ENCODE measurements at regions of chr17 and their contacts with region 1.

Region 1: DNA sequence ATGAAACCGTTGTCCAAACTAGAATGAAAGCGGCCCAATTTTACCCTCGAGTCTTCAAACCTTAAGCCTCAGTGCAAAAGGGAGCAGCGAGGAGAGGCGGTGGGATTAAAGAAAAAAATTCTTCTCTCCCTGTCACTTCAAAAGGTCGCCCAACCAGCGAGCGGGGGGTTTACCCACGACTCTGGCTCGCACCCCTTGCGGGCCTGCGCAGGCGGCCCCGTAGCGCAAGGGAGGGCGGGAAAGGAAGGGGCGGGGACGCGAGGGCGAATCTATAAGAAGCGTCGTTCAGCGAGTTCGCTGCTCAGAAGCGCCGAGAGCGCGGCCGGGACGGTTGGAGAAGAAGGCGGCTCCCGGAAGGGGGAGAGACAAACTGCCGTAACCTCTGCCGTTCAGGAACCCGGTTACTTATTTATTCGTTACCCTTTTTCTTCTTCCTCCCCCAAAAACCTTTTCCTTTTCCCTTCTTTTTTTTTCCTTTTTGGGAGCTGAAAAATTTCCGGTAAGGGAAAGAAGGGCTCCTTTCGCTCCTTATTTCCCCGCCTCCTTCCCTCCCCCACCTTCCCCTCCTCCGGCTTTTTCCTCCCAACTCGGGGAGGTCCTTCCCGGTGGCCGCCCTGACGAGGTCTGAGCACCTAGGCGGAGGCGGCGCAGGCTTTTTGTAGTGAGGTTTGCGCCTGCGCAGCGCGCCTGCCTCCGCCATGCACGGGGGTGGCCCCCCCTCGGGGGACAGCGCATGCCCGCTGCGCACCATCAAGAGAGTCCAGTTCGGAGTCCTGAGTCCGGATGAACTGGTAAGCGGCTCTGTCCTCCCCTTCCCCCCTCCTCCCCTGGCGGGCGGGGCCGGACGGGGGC is at the start of gene POLR2A:
- DNase-seq: peak; percentile 96 to 100 (median 98)
- ATAC-seq: peak; percentile 66
- H3K4me3 ChIP-seq: peak within 1 kb of the TSS; percentile 87
- H3K4me3 Mint-ChIP-seq: peak within 1 kb of the TSS; percentile 94
- H3K27ac ChIP-seq: peak within 1 kb of the TSS; percentile 99
- H3K27ac Mint-ChIP-seq: peak within 1 kb of the TSS; percentile 99
- H3K4me1 ChIP-seq: peaks cover 73% of the 10 kb centered on the region
- H3K4me1 Mint-ChIP-seq: peaks cover 72% of the 10 kb centered on the region
- H3K27me3 ChIP-seq: no peaks in the 10 kb centered on the region
- H3K27me3 Mint-ChIP-seq: no peaks in the 10 kb centered on the region
- CTCF ChIP-seq: no peak
- total RNA-seq, gene POLR2A: 491 to 501 TPM

Region 2: GRCh38 chr17:7329374-7329996 is 154.8 kb before region 1 on chr17:
- CTCF ChIA-PET with region 1: no interaction called
- POLR2A ChIA-PET with region 1: interaction called, 18 read pairs
- intact Hi-C with region 1: no loop called
- DNase-seq: peak; percentile 90 to 99 (median 94)
- ATAC-seq: peak; percentile 73
- H3K4me3 ChIP-seq: peak overlapping the region; percentile 64
- H3K4me3 Mint-ChIP-seq: peak overlapping the region; percentile 90
- H3K27ac ChIP-seq: peak overlapping the region; percentile 80 to 92
- H3K27ac Mint-ChIP-seq: peak overlapping the region; percentile 88
- H3K4me1 ChIP-seq: peaks cover 58% of the 10 kb centered on the region
- H3K4me1 Mint-ChIP-seq: peaks cover 47% of the 10 kb centered on the region
- H3K27me3 ChIP-seq: no peaks in the 10 kb centered on the region
- H3K27me3 Mint-ChIP-seq: no peaks in the 10 kb centered on the region
- CTCF ChIP-seq: no peak

Region 3: DNA sequence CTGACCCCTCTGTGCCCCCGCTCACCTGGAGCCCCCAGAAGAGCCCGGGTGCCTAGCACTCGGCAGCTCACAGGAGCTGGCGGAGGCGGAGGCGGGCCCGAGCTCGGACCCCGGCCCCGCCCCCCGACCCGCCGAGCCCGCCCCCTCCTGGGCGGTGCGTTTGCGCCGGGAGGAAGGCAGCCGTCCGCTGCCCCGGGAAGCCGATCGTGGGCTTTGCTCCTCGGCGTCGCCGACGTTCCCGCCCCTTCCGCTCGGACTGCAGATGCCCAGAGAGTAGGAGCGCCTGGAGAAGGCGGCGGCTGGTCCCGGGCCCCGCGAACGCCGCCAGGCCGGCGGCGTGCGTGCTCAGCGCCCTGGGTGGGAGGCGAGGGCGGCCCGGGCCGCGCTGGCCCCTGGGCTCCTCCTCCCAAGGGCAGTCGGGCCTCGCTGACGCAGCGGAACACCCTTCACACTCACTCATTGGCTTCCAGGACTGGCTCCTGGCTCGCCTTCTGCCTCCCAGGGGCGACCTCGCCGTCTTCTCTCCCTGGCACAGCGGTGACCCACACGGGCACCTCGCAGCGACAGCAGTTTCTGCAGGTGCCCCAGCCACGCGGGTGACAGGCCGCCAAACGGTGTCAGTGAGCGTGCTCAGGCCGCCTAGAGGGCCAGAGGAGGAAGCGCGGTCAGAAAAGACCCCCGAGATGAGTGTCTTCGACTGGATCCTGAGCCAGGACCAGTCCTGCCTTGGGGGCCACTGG is 89.7 kb before region 1 on chr17 and contains the start of gene PLSCR3:
- CTCF ChIA-PET with region 1: no interaction called
- POLR2A ChIA-PET with region 1: no interaction called
- intact Hi-C with region 1: loop called in 1 of 2 experiments (anchors 5 kb)
- DNase-seq: peak; percentile 56 to 90 (median 80)
- ATAC-seq: peak; percentile 87
- H3K4me3 ChIP-seq: peak within 1 kb of the TSS; percentile 82
- H3K4me3 Mint-ChIP-seq: peak within 1 kb of the TSS; percentile 96
- H3K27ac ChIP-seq: peak within 1 kb of the TSS; percentile 68 to 79
- H3K27ac Mint-ChIP-seq: peak within 1 kb of the TSS; percentile 94
- H3K4me1 ChIP-seq: peaks cover 48% of the 10 kb centered on the region
- H3K4me1 Mint-ChIP-seq: peaks cover 37% of the 10 kb centered on the region
- H3K27me3 ChIP-seq: no peaks in the 10 kb centered on the region
- H3K27me3 Mint-ChIP-seq: no peaks in the 10 kb centered on the region
- CTCF ChIP-seq: peak; percentile 20
- total RNA-seq, gene PLSCR3: 66.3 to 70.3 TPM

Region 4: GRCh38 chr17:7454980-7455379 is 29.3 kb before region 1 on chr17:
- CTCF ChIA-PET with region 1: no interaction called
- POLR2A ChIA-PET with region 1: interaction called, 137 read pairs
- intact Hi-C with region 1: loop called (anchors 1 kb)
- DNase-seq: no peak
- ATAC-seq: no peak
- H3K4me3 ChIP-seq: peak overlapping the region; percentile 94
- H3K4me3 Mint-ChIP-seq: peak overlapping the region; percentile 94
- H3K27ac ChIP-seq: peak overlapping the region in 1 of 2 donors; percentile 52
- H3K27ac Mint-ChIP-seq: peak overlapping the region; percentile 85
- H3K4me1 ChIP-seq: peaks cover 23% of the 10 kb centered on the region
- H3K4me1 Mint-ChIP-seq: peaks cover 39% of the 10 kb centered on the region
- H3K27me3 ChIP-seq: no peaks in the 10 kb centered on the region
- H3K27me3 Mint-ChIP-seq: no peaks in the 10 kb centered on the region
- CTCF ChIP-seq: no peak

Region 5: GRCh38 chr17:7572588-7573323 is 88.5 kb after region 1 on chr17:
- CTCF ChIA-PET with region 1: no interaction called
- POLR2A ChIA-PET with region 1: interaction called, 9 read pairs
- intact Hi-C with region 1: loop called in 1 of 2 experiments (anchors 1 kb)
- DNase-seq: peak; percentile 99 to 100 (median 100)
- ATAC-seq: peak; percentile 83
- H3K4me3 ChIP-seq: peak overlapping the region; percentile 100
- H3K4me3 Mint-ChIP-seq: peak overlapping the region; percentile 99
- H3K27ac ChIP-seq: peak overlapping the region; percentile 96 to 98
- H3K27ac Mint-ChIP-seq: peak overlapping the region; percentile 99
- H3K4me1 ChIP-seq: peaks cover 50% of the 10 kb centered on the region
- H3K4me1 Mint-ChIP-seq: peaks cover 52% of the 10 kb centered on the region
- H3K27me3 ChIP-seq: no peaks in the 10 kb centered on the region
- H3K27me3 Mint-ChIP-seq: peaks cover 3% of the 10 kb centered on the region
- CTCF ChIP-seq: no peak

Region 6: GRCh38 chr17:7650509-7651096 is 166.3 kb after region 1 on chr17 and contains the start of gene ATP1B2:
- CTCF ChIA-PET with region 1: no interaction called
- POLR2A ChIA-PET with region 1: no interaction called
- intact Hi-C with region 1: no loop called
- DNase-seq: peak; percentile 56 to 88 (median 69)
- ATAC-seq: peak; percentile 94
- H3K4me3 ChIP-seq: peak within 1 kb of the TSS; percentile 52
- H3K4me3 Mint-ChIP-seq: peak within 1 kb of the TSS; percentile 85
- H3K27ac ChIP-seq: no peak within 1 kb of the TSS
- H3K27ac Mint-ChIP-seq: no peak within 1 kb of the TSS
- H3K4me1 ChIP-seq: peaks cover 23% of the 10 kb centered on the region
- H3K4me1 Mint-ChIP-seq: peaks cover 22% of the 10 kb centered on the region
- H3K27me3 ChIP-seq: peaks cover 27 to 43% of the 10 kb centered on the region in 2 experiments
- H3K27me3 Mint-ChIP-seq: peaks cover 62% of the 10 kb centered on the region
- CTCF ChIP-seq: no peak
- total RNA-seq, gene ATP1B2: 0.17 to 0.69 TPM

Region 7: DNA sequence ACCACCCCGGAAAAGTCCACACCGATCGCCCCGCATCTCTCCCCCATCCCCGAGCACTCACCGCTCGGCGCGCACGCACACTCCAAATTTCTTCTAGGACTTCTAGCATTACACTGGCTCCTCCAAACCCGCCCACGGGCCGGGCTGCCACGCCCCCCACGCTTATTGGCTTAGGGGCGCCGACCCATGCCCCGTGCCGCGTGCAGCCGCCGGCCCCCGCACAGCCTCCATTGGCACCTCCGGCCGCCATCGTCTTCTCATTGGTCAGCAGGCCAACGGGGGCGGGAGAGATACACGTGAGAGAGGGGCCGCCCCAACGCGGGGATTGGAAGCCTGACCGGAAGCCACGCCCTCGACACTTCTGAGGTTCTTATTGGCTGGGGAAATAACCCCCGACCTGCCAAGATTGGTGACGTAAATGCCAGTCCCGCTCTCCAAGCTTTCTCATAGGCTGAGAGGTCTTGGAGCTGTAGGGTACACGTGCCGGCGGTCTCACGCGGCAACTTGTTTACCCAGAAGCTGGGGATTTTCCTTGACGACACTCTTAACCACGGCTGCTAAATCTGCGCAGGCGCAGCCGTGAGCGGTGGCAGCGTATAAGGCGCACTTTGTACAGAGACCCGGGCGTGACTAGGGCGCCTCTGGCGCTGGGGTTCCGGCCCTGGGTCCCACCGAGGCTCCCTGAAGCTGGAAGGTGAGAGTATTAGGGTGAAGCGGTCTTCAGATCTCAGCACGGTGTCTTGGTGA is 672.1 kb after region 1 on chr17:
- CTCF ChIA-PET with region 1: no interaction called
- POLR2A ChIA-PET with region 1: interaction called, 3 read pairs
- intact Hi-C with region 1: loop called in 1 of 2 experiments (anchors 10 kb)
- DNase-seq: peak; percentile 99 to 100 (median 100)
- ATAC-seq: peak; percentile 70
- H3K4me3 ChIP-seq: peak overlapping the region; percentile 86
- H3K4me3 Mint-ChIP-seq: no peak overlapping the region
- H3K27ac ChIP-seq: peak overlapping the region; percentile 99 to 100
- H3K27ac Mint-ChIP-seq: no peak overlapping the region
- H3K4me1 ChIP-seq: peaks cover 88% of the 10 kb centered on the region
- H3K4me1 Mint-ChIP-seq: peaks cover 73% of the 10 kb centered on the region
- H3K27me3 ChIP-seq: no peaks in the 10 kb centered on the region
- H3K27me3 Mint-ChIP-seq: peaks cover 3% of the 10 kb centered on the region
- CTCF ChIP-seq: no peak